GM10248 (cell line): ENCODE measurements at regions of chr6 and their contacts with region 1.

Region 1: DNA sequence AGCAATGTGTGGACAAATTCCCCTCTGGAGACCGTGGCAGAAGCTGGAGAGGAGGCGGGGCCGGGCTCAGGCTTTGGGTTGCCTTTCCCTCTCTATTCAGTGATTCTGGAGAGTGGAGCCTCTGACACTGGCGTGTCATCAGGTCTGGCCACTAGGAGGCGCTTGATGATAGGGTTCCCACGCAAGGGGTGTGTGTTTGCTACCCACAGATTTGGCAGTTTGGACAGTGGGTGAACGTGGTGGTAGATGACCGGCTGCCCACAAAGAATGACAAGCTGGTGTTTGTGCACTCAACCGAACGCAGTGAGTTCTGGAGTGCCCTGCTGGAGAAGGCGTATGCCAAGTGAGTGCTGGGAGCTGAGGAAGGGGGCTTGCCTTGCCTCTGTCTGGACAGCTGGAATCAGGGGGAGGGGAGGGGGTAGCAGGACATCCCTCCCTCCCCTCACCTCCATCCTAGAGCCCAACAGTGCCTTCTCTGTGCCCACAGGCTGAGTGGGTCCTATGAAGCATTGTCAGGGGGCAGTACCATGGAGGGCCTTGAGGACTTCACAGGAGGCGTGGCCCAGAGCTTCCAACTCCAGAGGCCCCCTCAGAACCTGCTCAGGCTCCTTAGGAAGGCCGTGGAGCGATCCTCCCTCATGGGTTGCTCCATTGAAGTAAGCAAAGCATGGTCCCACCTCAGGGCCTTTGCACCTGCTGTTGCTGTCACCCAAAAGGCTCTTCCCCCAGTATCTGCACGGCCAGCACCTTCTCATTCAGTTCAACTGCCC is 14.3 kb downstream of the CAPN11 start:
- DNase-seq: peak; percentile 89
- CTCF ChIP-seq: peak; percentile 95

Region 2: GRCh38 chr6:43524483-43524961 is 648.4 kb before region 1 on chr6:
- CTCF ChIA-PET with region 1: no interaction called
- POLR2A ChIA-PET with region 1: no interaction called
- DNase-seq: no peak
- CTCF ChIP-seq: no peak

Region 3: GRCh38 chr6:44161997-44162338 is 10.9 kb before region 1 on chr6:
- CTCF ChIA-PET with region 1: interaction called, 49 read pairs
- POLR2A ChIA-PET with region 1: no interaction called
- DNase-seq: no peak
- CTCF ChIP-seq: no peak

Region 4: DNA sequence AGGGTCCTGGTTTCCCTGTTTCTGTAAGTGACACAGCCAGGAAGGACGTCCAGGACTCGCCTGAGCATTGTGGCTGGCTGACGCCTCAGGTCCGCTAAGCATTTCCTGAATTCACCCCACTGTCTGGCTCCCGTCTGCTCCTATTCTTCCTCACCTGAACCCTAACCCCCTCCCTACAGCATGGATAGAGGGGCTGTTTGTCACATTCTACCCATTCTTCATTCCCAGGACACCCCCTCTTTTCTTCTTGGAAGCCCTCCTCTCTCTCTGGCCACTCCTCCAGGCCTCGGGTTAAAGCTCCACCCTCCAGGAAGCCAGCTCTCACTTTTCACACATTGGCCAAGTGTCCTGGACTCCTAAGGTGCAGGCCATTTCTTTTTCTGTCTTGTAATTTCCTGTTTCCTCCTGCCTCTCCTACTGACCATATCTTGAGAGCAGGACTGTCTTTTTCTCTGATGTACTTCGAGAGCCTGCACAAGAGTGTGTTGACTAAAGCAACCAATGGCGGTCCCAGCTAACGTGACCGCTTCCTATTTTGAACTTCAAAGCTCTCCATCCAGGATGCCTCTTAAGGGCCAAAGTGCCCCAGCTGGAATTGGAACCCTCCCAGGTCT is 19.6 kb after region 1 on chr6:
- CTCF ChIA-PET with region 1: interaction called, 27 read pairs
- POLR2A ChIA-PET with region 1: no interaction called
- DNase-seq: peak; percentile 39
- CTCF ChIP-seq: no peak

Region 5: DNA sequence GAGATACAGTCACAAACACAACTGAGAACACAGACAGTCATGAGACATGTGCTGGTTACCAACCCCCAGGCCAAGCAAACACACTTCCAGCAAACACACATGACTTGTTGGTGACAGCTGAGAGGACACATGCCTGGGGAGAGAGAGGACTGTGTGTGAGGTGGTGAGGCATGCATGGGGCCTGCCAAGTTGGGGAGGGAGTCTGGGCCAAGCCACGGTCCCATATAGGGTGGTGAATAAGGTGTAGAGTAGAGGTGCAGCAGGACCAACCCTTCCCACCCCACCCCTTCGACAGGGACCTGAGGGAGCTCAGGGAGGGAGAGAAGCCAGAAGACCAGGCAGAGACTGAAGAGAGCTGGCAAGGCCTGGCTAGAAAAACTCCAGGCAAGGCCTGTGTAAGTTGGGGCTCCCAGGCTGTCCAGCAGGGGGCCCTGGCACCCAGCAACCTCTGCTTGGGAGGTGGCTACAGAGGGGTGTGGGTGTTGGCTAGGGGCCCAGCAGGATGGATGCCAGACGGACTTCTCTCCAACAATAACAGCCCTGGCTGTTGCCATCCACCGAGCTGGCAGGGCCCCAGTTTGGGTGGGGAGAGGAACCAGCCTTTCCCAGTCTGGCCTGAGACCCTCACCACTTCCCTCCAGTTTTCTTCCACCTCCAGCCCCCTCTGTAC is 48.5 kb after region 1 on chr6:
- CTCF ChIA-PET with region 1: interaction called, 32 read pairs
- POLR2A ChIA-PET with region 1: no interaction called
- DNase-seq: peak; percentile 84
- CTCF ChIP-seq: peak; percentile 97

Region 6: DNA sequence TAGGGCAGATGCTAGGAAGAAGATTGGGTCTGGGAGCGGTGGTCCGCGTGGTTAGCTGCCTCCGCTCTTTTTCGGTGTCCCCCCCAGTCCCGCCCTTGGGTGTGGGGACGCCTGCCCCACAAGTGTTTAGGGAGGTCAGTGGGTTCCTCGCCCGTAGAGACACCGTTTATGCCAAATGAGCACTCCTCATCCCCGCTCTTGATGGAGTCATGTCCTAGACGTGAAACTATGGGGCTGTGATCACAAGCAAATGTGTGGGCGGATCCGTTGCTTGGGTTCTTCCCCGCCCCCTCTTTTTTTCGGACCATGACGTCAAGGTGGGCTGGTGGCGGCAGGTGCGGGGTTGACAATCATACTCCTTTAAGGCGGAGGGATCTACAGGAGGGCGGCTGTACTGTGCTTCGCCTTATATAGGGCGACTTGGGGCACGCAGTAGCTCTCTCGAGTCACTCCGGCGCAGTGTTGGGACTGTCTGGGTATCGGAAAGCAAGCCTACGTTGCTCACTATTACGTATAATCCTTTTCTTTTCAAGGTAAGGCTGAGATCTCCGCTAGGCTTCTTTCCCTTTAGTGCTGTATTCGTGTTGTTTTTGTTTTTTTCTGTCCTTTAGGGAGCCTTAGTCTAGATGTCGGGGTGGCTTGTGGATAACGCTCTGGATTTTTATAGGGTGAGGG is 73.9 kb after region 1 on chr6 and contains the start of gene HSP90AB1:
- CTCF ChIA-PET with region 1: interaction called, 27 read pairs
- POLR2A ChIA-PET with region 1: interaction called, 12 read pairs
- DNase-seq: peak; percentile 93
- CTCF ChIP-seq: no peak

Region 7: GRCh38 chr6:44338228-44339122 is 165.6 kb after region 1 on chr6:
- CTCF ChIA-PET with region 1: interaction called, 15 read pairs
- POLR2A ChIA-PET with region 1: no interaction called
- DNase-seq: peak; percentile 77
- CTCF ChIP-seq: peak; percentile 84